Left colon (tissue), 2 donors: ENCODE measurements at regions of chr3 and their contacts with region 1.

Region 1: DNA sequence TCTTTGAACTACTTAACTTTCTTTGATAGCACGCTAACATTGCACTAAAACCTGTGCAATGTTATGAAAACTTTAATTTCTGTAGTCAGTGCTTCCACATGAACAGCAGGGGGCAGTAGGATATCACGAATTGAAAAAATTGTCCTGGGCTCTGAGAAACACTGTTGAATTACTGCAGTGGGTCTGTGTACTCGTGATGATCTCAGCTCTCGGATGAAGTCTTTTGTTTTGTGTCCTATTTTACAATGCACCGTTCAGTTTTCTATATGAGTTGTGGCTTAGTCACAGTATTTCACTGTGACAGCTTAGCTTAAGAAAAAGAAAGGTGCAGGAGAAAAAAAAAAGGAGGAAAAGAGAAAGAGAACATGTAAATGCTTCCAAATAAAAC is 141.3 kb upstream of the CCDC54 start:
- DNase-seq: no peak
- ATAC-seq: peak; percentile 80

Region 2: GRCh38 chr3:106839576-106840280 is 396.2 kb before region 1 on chr3:
- intact Hi-C with region 1: no loop called
- DNase-seq: no peak
- ATAC-seq: no peak

Region 3: DNA sequence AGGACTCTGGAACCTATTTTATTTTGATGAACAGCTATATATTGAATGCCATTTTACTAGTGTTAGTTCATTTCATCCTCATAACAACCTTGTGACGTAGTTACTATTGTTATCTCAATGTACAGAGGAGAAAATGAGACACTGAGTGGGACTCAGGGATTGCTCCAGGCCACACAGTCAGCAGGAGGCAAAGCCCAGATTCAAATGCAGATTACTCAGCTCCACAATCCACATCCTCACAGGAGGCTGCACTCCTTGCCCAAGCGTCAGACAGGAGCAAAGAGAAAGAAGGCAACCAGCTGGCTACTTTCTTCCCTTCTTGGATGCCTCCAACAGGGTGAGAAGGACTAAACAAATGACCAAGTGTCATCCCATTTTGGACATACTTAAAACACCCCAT is 49.3 kb after region 1 on chr3:
- intact Hi-C with region 1: no loop called
- DNase-seq: no peak
- ATAC-seq: no peak

Region 4: DNA sequence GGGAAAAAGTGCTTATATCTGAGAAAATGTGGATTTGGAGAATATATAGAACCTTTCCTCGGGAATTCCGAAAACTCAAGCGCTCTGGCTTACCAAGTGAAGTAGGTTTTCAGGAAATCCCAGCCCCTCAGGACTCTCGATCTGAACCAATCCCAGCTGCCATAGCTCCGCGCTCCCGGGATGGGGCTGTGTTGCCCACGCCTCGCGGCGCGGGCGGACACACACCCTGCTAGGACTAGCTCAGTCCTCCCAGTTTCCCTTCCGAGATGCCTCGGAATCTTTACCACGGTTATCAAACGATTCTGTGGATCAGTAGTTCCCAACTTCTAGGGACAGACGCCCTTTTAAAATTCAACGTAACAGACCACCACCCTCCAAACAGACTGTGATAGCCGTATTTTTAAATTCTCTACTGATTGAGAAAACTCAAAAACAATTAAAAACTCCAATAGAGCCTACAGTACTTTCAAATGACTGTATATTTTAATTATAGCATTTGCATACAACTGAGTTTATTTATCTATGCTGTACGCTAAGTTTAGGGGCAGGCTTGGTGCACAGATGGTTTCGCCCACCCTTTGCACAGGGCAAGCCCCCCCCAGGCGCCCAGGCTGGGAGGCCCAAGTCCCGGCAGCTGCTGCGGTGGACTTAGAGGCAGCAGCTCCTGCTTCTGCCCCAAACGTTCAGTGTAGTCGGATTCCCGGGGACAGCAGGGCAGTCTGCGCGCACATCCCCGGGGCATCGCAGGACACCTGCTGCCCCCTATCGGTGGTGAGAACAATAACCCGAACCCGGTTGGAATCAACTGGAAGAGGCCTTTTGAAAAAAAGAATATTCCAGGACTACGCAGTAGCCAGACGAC is 193.6 kb after region 1 on chr3:
- intact Hi-C with region 1: loop called in 1 of 2 experiments (anchors 5 kb)
- DNase-seq: peak; percentile 65 to 67
- ATAC-seq: peak; percentile 66